Esophagus squamous epithelium (tissue), 5 donors: ENCODE measurements at regions of chr18 and their contacts with region 1.

Region 1: DNA sequence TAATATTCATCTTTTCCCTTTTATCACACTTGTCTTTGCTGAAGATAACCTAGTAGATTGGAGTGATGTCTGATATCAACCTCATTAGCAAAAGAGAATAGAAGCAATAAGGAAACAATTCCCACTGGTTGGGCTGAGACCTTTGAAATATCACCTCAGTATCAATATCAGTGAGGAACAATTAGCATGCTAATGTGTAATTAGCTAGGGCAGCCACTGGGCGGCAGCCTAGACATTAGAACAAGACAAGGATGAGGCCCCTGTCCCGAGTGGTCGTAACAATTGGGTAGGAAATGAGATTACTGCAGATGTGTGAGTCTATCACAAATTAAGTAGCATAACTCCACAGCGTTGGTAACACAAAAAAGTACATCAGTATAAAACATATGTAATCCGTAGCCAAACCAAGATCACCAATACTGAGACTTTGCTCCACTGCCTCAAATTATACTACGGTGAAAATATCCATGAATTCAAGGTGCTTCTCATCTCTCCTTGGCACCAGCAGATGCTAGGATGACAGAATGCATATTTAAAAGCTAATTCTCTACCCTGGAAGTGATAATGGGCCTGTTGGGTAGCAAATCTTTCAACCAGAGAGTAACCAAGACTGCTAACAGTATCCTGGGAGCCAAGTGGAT is 99.1 kb downstream of the ALPK2 start:
- DNase-seq: no peak
- H3K4me3 ChIP-seq: no peak overlapping the region
- H3K27ac ChIP-seq: no peak overlapping the region
- H3K4me1 ChIP-seq: peaks cover 0 to 5% (median 0%) of the 10 kb centered on the region in 3 donors
- H3K27me3 ChIP-seq: no peaks in the 10 kb centered on the region
- CTCF ChIP-seq: peak; percentile 75 to 89 (median 82)
- POLR2A ChIP-seq: no peak

Region 2: DNA sequence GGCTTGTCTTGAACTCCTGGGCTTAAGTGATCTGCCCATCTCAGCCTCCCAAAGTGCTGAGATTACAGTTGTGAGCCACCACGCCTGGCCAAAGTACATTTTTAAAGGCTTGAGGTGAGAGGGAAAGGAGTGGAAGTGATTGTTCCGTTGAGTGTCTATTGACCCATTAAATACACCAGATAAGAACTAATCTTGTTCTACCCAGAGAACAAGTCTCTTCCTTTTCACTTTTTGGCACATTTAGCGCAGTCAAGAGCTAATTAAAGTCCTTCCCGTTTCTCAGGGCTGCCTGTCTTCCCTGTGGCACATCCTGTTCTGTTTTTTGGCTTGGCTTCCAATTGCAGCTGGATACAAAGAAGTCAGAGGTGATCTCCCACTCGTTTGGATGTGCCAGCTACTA is 73.2 kb before region 1 on chr18:
- intact Hi-C with region 1: no loop called
- DNase-seq: no peak
- H3K4me3 ChIP-seq: no peak overlapping the region
- H3K27ac ChIP-seq: no peak overlapping the region
- H3K4me1 ChIP-seq: peaks cover 0 to 14% (median 0%) of the 10 kb centered on the region in 3 donors
- H3K27me3 ChIP-seq: no peaks in the 10 kb centered on the region
- CTCF ChIP-seq: no peak
- POLR2A ChIP-seq: no peak

Region 3: GRCh38 chr18:58590839-58591238 is 61.0 kb after region 1 on chr18:
- intact Hi-C with region 1: loop called (anchors 10 kb)
- DNase-seq: no peak
- H3K4me3 ChIP-seq: no peak overlapping the region
- H3K27ac ChIP-seq: no peak overlapping the region
- H3K4me1 ChIP-seq: peaks cover 0 to 17% (median 0%) of the 10 kb centered on the region in 3 donors
- H3K27me3 ChIP-seq: no peaks in the 10 kb centered on the region
- CTCF ChIP-seq: no peak
- POLR2A ChIP-seq: no peak

Region 4: GRCh38 chr18:58761241-58761969 is 231.6 kb after region 1 on chr18:
- intact Hi-C with region 1: loop called (anchors 5 kb)
- DNase-seq: no peak
- H3K4me3 ChIP-seq: no peak overlapping the region
- H3K27ac ChIP-seq: no peak overlapping the region
- H3K4me1 ChIP-seq: peaks cover 0 to 8% (median 0%) of the 10 kb centered on the region in 3 donors
- H3K27me3 ChIP-seq: peaks cover 0 to 48% (median 0%) of the 10 kb centered on the region in 4 donors
- CTCF ChIP-seq: no peak
- POLR2A ChIP-seq: no peak